ENCODE measurements at regions of chr1 and their contacts with region 1.

Region 1: DNA sequence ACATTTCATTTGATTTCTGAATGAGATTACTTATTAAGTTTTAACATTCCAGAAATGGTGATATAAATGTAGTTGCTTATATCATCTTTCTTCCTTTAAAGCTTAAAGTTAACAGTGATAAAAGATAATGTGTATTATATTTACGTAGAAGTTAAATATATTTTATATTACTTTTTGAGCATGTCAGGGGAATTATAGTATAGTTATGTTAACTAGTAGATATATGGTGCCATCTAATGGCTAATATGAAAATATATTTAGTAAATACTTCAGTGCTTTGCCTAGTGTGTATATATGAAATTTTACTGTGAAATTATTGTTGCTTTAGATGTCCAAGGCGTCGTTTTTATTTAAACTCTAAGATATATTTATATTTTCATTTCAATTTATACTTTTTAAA is 51.5 kb downstream of the SYT14 start:
- DNase-seq: no peak
- H3K4me3 Mint-ChIP-seq: no peak overlapping the region
- H3K27ac Mint-ChIP-seq: no peak overlapping the region
- H3K4me1 Mint-ChIP-seq: no peaks in the 10 kb centered on the region
- H3K27me3 Mint-ChIP-seq: no peaks in the 10 kb centered on the region

Region 2: DNA sequence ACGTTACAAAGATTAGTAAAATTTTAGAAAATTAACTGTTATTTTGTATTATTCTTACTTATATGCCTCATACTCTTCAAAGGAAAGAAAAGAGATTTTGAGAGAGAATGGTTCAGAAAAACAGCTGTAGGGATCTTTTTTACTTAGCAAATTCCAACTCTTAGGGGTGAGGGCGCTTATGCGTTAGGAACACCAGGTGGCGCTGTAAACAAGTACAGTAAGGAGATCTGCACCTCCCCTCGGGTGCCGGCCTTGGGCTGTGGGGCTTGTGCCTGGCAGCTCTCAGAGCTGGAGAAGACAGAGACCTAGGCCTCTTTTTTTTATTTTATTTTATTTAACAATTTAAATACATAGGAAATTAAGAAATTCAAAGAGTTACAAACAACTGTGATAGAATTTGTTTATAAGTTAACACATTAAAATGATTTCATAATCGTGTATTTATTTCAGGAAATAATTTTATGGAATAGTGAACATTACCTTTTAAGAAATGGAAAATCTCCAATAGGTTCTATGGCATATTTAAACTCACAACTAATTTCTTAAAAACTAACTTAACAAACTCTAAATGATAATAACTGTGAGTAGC is 129.1 kb before region 1 on chr1:
- CTCF ChIA-PET with region 1: interaction called, 20 read pairs
- POLR2A ChIA-PET with region 1: no interaction called
- DNase-seq: peak; percentile 74
- H3K4me3 Mint-ChIP-seq: no peak overlapping the region
- H3K27ac Mint-ChIP-seq: no peak overlapping the region
- H3K4me1 Mint-ChIP-seq: no peaks in the 10 kb centered on the region
- H3K27me3 Mint-ChIP-seq: peaks cover 28% of the 10 kb centered on the region

Region 3: DNA sequence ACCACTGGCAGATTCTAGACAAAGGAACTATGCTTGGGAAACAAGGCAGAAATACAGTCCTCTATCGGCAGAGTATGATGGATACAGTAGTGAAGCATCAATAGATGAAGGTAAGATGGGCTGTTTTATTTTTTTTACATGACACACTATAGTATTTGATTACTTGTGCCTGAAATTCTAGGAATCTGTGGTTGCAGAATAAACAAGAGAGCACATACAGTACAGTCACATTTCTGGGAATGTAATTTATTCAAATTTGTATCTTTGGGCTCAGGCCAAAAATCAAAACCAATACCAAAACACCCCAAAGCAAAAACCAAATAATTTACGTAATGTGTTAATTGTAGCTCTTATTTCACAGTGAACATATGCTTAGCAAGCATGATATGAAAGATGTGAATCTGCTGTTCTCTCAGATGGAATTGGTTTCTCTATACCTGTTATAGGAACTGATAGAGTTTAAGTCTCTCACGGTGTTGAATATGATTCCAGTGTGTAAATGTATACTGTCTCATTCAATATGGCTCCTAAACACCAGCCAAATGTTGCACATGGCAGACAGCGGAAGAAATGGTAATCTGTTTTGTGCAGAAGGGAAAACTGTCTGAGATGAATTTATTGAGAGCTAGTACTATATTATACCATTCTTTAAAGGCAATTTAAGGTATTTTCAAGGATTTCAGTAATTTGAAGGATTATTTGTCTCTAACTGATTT is 31.8 kb after region 1 on chr1:
- CTCF ChIA-PET with region 1: no interaction called
- POLR2A ChIA-PET with region 1: no interaction called
- DNase-seq: no peak
- H3K4me3 Mint-ChIP-seq: no peak overlapping the region
- H3K27ac Mint-ChIP-seq: no peak overlapping the region
- H3K4me1 Mint-ChIP-seq: no peaks in the 10 kb centered on the region
- H3K27me3 Mint-ChIP-seq: peaks cover 2% of the 10 kb centered on the region